ENCODE measurements at regions of chr5 and their contacts with region 1.

Region 1: GRCh38 chr5:100852988-100853449 is 50.1 kb downstream of the ST8SIA4 start:
- DNase-seq: no peak
- H3K4me3 ChIP-seq: no peak overlapping the region
- H3K27ac ChIP-seq: peak overlapping the region; percentile 78
- H3K4me1 ChIP-seq: peaks cover 10% of the 10 kb centered on the region
- H3K27me3 ChIP-seq: no peaks in the 10 kb centered on the region
- CTCF ChIP-seq: no peak

Region 2: GRCh38 chr5:100761192-100761591 is 91.8 kb before region 1 on chr5:
- intact Hi-C with region 1: no loop called
- DNase-seq: no peak
- H3K4me3 ChIP-seq: no peak overlapping the region
- H3K27ac ChIP-seq: no peak overlapping the region
- H3K4me1 ChIP-seq: no peaks in the 10 kb centered on the region
- H3K27me3 ChIP-seq: no peaks in the 10 kb centered on the region
- CTCF ChIP-seq: no peak

Region 3: GRCh38 chr5:100903039-100903887 is 50.2 kb after region 1 on chr5 and contains the start of gene ST8SIA4:
- intact Hi-C with region 1: loop called (anchors 10 kb)
- DNase-seq: peak; percentile 87
- H3K4me3 ChIP-seq: peak within 1 kb of the TSS; percentile 70
- H3K27ac ChIP-seq: peak within 1 kb of the TSS; percentile 89
- H3K4me1 ChIP-seq: peaks cover 37% of the 10 kb centered on the region
- H3K27me3 ChIP-seq: peaks cover 44% of the 10 kb centered on the region
- CTCF ChIP-seq: no peak
- total RNA-seq, gene ST8SIA4: 3.2 TPM

Region 4: DNA sequence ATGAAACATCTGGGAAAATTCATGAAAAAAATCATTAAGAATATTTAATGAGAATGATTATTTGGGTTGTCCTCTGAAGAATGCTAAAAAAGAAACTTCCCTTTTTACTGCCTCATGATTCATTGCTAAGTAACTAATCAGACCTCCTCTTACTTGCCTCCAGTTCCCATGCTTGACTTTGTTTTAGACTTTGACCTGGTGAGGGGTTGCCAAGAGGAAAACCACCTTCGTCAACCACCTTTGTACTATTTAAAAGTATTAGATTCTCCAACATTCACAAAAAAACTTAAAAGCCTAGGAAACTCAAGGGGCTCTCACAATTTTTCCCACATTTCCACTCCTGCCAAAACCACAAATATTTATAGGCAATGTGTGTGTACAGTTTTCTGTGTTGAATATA is 165.3 kb after region 1 on chr5:
- intact Hi-C with region 1: no loop called
- DNase-seq: no peak
- H3K4me3 ChIP-seq: no peak overlapping the region
- H3K27ac ChIP-seq: peak overlapping the region; percentile 42
- H3K4me1 ChIP-seq: no peaks in the 10 kb centered on the region
- H3K27me3 ChIP-seq: no peaks in the 10 kb centered on the region
- CTCF ChIP-seq: no peak

Region 5: DNA sequence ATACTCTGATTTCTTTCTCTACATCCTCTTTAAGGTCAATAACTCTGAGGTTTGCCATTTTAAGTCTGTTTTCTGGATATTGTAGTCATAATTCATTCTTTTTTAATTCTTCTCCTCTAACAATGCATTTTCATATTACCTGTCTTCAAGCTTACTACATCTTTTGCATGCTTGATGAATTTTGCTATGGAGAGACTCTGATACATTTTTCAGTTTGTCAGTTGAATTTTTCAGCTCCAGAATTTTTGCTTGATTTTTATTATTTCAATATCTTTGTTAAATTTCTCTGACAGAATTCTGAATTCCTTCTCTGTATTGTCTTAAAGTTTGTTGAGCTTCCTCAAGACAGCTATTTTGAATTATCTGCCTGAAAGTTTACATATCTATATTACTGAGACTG is 209.9 kb after region 1 on chr5:
- intact Hi-C with region 1: no loop called
- DNase-seq: no peak
- H3K4me3 ChIP-seq: no peak overlapping the region
- H3K27ac ChIP-seq: no peak overlapping the region
- H3K4me1 ChIP-seq: no peaks in the 10 kb centered on the region
- H3K27me3 ChIP-seq: no peaks in the 10 kb centered on the region
- CTCF ChIP-seq: no peak